ENCODE measurements at regions of chr11 and their contacts with region 1.

Region 1: GRCh38 chr11:73141848-73142286 is 251 bp downstream of the FCHSD2 start:
- DNase-seq: peak; percentile 78
- H3K4me3 ChIP-seq: peak overlapping the region; percentile 80
- H3K27ac ChIP-seq: peak overlapping the region; percentile 97
- H3K4me1 ChIP-seq: peaks cover 68% of the 10 kb centered on the region
- CTCF ChIP-seq: no peak

Region 2: GRCh38 chr11:72924568-72925190 is 217.2 kb before region 1 on chr11:
- CTCF ChIA-PET with region 1: no interaction called
- POLR2A ChIA-PET with region 1: no interaction called
- intact Hi-C with region 1: loop called (anchors 5 kb)
- DNase-seq: peak; percentile 53
- H3K4me3 ChIP-seq: no peak overlapping the region
- H3K27ac ChIP-seq: no peak overlapping the region
- H3K4me1 ChIP-seq: no peaks in the 10 kb centered on the region
- CTCF ChIP-seq: peak; percentile 78

Region 3: GRCh38 chr11:72962084-72962483 is 179.8 kb before region 1 on chr11:
- CTCF ChIA-PET with region 1: no interaction called
- POLR2A ChIA-PET with region 1: no interaction called
- intact Hi-C with region 1: no loop called
- DNase-seq: no peak
- H3K4me3 ChIP-seq: no peak overlapping the region
- H3K27ac ChIP-seq: no peak overlapping the region
- H3K4me1 ChIP-seq: no peaks in the 10 kb centered on the region
- CTCF ChIP-seq: no peak

Region 4: DNA sequence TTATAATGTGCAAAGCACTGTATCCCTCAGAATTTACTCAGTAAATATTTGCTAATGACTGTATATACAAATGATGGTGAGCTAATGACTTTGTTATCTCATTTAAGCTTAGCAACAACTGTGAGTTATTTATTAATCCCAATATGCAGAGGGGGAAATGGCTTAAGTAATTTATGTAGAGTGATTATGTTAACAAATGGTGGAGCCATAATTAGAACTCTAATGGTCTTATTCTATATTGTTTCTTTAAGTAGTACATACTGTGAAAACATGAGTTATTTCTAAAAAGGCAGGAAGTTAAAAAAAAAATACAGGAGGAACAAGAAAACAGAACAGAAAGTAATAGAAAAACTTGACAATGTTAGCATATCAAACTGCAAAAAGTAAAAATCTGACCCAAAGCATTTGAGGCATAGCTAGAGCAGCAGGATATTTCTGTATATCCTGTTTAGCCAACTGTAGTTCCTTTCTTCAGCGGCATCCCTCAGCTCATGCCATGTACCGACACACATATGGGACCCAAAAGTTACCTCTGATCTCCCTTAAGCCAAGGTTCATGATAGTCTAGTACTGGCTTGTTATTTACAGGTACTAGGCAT is 94.0 kb before region 1 on chr11:
- CTCF ChIA-PET with region 1: interaction called, 3 read pairs
- POLR2A ChIA-PET with region 1: interaction called, 4 read pairs
- intact Hi-C with region 1: loop called (anchors 2 kb)
- DNase-seq: peak; percentile 94
- H3K4me3 ChIP-seq: peak overlapping the region; percentile 55
- H3K27ac ChIP-seq: peak overlapping the region; percentile 97
- H3K4me1 ChIP-seq: peaks cover 70% of the 10 kb centered on the region
- CTCF ChIP-seq: no peak

Region 5: DNA sequence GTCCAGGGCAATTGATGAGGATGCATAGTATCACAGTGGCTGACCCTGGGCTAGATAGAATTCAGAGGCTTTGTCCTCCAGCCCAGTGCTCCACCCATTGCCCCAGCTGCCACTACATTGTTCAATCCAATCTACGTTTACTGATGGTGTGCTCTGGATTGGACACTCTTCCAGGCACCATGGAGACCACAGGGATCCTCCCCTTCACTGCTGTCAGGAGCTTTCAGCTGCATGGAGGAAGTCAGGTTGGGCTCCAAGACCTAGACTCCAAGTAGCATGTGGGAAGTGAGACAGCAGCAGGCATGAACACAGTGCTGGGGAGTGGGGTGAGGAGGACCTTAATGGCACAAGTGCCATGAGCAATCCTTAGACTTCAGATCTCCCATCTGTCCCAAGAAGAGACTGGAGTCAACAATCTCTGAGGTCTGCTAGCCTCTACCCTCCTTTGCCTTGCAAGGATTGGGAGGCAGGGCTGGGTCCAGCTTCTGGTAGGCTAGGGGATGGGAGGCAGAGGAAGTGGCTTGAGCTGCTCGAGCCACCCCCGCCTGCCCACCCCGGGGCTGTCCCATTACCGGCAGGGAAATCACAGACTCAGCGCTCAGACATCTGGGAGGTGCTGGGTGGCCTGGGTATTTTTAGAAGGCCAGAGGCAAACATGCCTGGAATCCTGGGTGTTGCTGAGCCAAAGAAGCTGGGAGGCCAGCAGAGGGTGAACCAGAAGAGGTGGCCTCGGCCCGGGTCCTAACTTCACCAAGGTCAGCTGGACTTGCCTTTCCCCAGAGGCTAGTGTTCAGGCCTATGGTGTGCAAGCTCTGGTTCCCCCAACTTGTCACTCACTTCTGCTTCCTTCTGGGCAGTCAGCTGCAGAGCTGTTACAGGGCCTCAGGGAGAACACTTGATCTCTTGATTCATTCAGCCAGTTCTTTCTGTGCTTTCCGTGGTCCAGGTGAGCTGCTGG is 15.5 kb after region 1 on chr11:
- CTCF ChIA-PET with region 1: interaction called, 19 read pairs
- POLR2A ChIA-PET with region 1: interaction called, 122 read pairs
- intact Hi-C with region 1: loop called (anchors 1 kb)
- DNase-seq: peak; percentile 77
- H3K4me3 ChIP-seq: peak overlapping the region; percentile 41
- H3K27ac ChIP-seq: peak overlapping the region; percentile 98
- H3K4me1 ChIP-seq: peaks cover 85% of the 10 kb centered on the region
- CTCF ChIP-seq: no peak

Region 6: GRCh38 chr11:73164803-73165540 is 23.1 kb after region 1 on chr11:
- CTCF ChIA-PET with region 1: interaction called, 4 read pairs
- POLR2A ChIA-PET with region 1: interaction called, 26 read pairs
- intact Hi-C with region 1: no loop called
- DNase-seq: no peak
- H3K4me3 ChIP-seq: no peak overlapping the region
- H3K27ac ChIP-seq: peak overlapping the region; percentile 17
- H3K4me1 ChIP-seq: peaks cover 81% of the 10 kb centered on the region
- CTCF ChIP-seq: no peak